Activated naive CD4-positive, alpha-beta T cell treated with anti-CD3 and anti-CD28 coated beads for 36 hours (primary cell): ENCODE measurements at regions of chr2 and their contacts with region 1.

Region 1: GRCh38 chr2:25165992-25166875 is 2.1 kb downstream of the POMC start:
- DNase-seq: peak; percentile 73
- H3K4me3 Mint-ChIP-seq: no peak overlapping the region
- H3K27ac Mint-ChIP-seq: no peak overlapping the region
- H3K4me1 Mint-ChIP-seq: peaks cover 21% of the 10 kb centered on the region
- H3K27me3 Mint-ChIP-seq: peaks cover 30% of the 10 kb centered on the region

Region 2: DNA sequence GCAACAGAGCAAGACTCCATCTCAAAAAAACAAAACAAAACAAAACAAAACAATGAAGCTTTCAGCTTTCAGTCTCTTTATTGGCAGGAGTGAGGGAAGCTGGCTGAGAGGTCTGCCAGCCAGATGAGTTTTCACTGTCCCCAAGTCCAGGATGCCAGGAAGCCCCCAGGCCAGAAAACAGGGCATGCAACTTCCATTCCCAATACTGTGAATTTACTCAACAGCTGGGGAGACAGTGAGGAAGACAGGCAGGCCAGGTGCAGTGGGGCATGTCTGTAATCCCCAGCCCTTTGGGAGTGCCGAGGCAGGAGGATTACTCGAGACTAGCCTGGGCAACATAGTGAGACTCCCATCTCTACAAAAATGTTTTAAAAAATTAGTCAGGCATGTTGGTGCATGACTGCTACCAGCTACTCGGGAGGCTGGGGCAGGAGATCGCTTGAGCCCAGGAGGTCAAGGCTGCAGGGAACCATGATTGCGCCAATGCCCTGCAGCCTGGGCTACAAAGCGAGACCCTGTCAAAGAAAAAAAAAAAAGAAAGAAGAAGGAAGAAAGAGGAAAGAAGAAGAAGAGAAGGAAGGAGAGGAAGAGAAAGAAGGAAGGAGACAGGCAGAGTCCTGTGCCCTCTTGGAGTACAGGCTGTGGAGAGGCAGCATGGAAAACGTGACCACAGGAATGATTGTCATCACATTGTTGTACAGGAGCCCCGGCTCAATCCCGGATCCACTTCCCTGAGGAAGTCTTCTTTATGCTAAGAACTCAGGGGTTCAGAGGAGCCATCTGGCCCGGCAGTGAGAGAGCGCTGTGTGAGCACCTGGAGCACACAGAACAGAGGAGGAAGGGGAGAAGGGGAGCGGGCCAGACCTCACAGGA is 31.3 kb after region 1 on chr2:
- CTCF ChIA-PET with region 1: interaction called, 79 read pairs
- intact Hi-C with region 1: loop called (anchors 1 kb)
- DNase-seq: no peak
- H3K4me3 Mint-ChIP-seq: no peak overlapping the region
- H3K27ac Mint-ChIP-seq: no peak overlapping the region
- H3K4me1 Mint-ChIP-seq: peaks cover 6% of the 10 kb centered on the region
- H3K27me3 Mint-ChIP-seq: no peaks in the 10 kb centered on the region

Region 3: DNA sequence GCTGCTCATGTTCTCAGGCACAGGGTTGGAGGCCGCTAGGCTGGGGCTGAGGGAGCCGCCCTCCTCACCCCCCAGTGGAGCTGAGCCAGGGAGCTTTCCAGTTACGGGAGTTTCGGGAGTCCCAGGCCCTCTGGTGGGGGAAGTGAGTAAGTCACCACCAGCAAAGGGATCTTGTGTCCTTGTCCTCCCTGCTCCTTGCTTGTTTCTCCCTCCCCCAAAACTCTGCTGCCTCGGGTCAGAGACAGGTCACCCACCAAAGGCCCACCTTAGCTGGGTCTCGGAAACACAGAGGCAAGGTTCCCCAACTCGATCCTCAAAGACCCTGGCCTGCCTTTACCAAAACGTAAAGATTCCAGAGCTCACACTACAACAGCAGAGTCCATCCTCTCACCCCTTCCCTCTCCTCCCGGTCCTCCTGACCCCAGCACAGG is 62.6 kb after region 1 on chr2:
- CTCF ChIA-PET with region 1: interaction called, 5 read pairs
- intact Hi-C with region 1: loop called (anchors 2 kb)
- DNase-seq: no peak
- H3K4me3 Mint-ChIP-seq: no peak overlapping the region
- H3K27ac Mint-ChIP-seq: no peak overlapping the region
- H3K4me1 Mint-ChIP-seq: peaks cover 11% of the 10 kb centered on the region
- H3K27me3 Mint-ChIP-seq: no peaks in the 10 kb centered on the region

Region 4: GRCh38 chr2:25558262-25558661 is 392.0 kb after region 1 on chr2:
- CTCF ChIA-PET with region 1: interaction called, 3 read pairs
- intact Hi-C with region 1: loop called (anchors 1 kb)
- DNase-seq: peak; percentile 58
- H3K4me3 Mint-ChIP-seq: no peak overlapping the region
- H3K27ac Mint-ChIP-seq: peak overlapping the region; percentile 35
- H3K4me1 Mint-ChIP-seq: peaks cover 52% of the 10 kb centered on the region
- H3K27me3 Mint-ChIP-seq: no peaks in the 10 kb centered on the region